Calu3 (cell line): ENCODE measurements at regions of chr4 and their contacts with region 1.

Region 1: DNA sequence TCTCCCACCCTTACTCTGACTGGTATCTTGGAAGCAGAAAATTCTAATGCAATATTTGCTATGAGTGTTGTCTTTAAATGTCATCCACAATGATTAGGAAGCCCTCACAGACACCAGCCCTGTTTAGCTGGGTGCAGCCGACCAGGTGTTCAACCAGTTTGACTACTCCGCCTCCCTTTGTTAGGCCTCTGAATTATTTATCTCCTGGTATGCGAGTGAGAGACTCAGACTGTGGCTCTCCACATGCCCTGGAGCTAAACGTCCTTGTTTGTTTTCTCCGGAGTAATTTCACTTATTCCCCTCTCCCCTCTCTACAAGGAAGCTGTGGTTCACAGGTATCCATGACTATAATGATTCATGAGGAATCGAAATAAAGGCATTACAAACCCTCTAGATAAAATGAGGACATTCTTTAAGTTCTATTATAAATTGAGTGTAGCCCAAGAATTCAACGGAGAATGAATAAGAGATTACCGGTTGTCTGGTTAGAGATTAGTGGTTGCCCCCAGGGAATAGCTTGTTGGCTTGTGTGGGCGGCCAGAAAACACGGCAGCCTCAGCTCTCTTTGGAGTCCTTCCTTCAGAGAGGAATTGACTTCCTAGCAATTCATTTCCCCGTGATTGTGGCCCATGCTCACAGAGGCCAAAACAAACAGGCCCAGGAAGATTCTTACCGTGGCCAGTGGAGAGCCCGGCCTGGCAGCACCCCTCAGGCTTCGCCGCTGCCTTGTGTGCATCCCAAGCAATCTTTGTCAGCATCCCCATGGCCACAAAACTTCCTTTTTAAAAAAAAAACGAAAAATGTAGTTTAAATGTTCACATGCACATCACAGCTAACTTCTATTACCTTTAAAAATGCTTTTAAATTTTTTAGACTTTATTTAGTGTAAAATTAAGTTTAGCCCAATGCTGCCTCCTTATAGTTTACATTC is 60.2 kb upstream of the CBR4 start:
- DNase-seq: peak; percentile 84
- H3K4me3 Mint-ChIP-seq: peak overlapping the region; percentile 54
- H3K27ac Mint-ChIP-seq: peak overlapping the region; percentile 97
- H3K4me1 Mint-ChIP-seq: peaks cover 30% of the 10 kb centered on the region
- H3K27me3 Mint-ChIP-seq: no peaks in the 10 kb centered on the region
- CTCF ChIP-seq: no peak

Region 2: GRCh38 chr4:169115897-169116254 is 45.6 kb after region 1 on chr4:
- CTCF ChIA-PET with region 1: interaction called, 9 read pairs
- intact Hi-C with region 1: loop called (anchors 5 kb)
- DNase-seq: peak; percentile 78
- H3K4me3 Mint-ChIP-seq: peak overlapping the region; percentile 5
- H3K27ac Mint-ChIP-seq: peak overlapping the region; percentile 85
- H3K4me1 Mint-ChIP-seq: peaks cover 68% of the 10 kb centered on the region
- H3K27me3 Mint-ChIP-seq: no peaks in the 10 kb centered on the region
- CTCF ChIP-seq: no peak

Region 3: GRCh38 chr4:169254546-169254983 is 184.3 kb after region 1 on chr4:
- CTCF ChIA-PET with region 1: no interaction called
- intact Hi-C with region 1: loop called (anchors 5 kb)
- DNase-seq: no peak
- H3K4me3 Mint-ChIP-seq: peak overlapping the region; percentile 68
- H3K27ac Mint-ChIP-seq: peak overlapping the region; percentile 94
- H3K4me1 Mint-ChIP-seq: peaks cover 70% of the 10 kb centered on the region
- H3K27me3 Mint-ChIP-seq: no peaks in the 10 kb centered on the region
- CTCF ChIP-seq: no peak

Region 4: GRCh38 chr4:169305651-169306050 is 235.4 kb after region 1 on chr4:
- CTCF ChIA-PET with region 1: no interaction called
- intact Hi-C with region 1: no loop called
- DNase-seq: no peak
- H3K4me3 Mint-ChIP-seq: no peak overlapping the region
- H3K27ac Mint-ChIP-seq: no peak overlapping the region
- H3K4me1 Mint-ChIP-seq: no peaks in the 10 kb centered on the region
- H3K27me3 Mint-ChIP-seq: no peaks in the 10 kb centered on the region
- CTCF ChIP-seq: no peak